Dorsolateral prefrontal cortex (tissue), 120 donors: ENCODE measurements at regions of chr2 and their contacts with region 1.

Region 1: DNA sequence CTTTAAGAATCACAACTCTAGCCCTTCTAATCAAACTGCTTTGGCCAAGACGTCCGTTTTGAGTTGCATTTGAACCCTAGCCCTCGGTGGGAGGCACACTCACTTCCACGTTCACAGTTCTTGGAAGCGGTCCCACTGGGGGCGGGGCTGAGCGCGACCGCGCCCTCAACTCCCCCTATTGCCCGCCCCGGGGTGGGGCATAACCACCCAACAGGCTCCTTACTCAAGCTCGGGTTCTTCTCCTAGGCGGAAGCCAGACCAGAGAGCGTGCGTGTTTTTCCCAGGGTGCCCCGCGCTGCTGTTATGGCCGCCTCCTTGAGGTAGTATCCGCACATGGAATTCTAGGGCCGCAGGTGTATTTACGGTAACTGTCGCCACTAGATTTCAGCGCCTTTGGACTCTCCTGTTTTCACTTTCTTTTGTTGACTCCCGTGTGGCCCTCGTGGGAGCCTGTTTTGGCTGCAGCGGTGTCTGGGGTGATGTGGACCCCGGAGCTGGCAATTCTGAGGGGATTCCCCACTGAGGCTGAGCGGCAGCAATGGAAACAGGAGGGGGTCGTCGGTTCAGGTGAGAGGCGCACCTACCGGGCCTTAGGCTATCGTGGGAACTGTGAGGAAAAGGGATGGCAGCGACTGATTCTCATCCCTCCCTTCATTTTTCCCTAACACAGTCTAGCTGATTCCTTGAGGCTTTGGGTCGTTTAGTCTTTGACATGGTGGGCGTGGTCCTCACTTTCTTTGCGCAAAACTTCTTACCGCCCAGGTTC is at the start of gene TTC27:
- DNase-seq: peak; percentile 94 to 98 (median 96)
- H3K4me3 ChIP-seq: peak within 1 kb of the TSS; percentile 54 to 99 (median 87)
- H3K27ac ChIP-seq: peak within 1 kb of the TSS in 52 of 59 donors; percentile 9 to 83 (median 64)
- H3K27me3 ChIP-seq: no peaks in the 10 kb centered on the region
- CTCF ChIP-seq: peak in 46 of 56 donors; percentile 2 to 65 (median 36)
- total RNA-seq, gene TTC27: 6.3 to 25.6 (median 12.2) TPM

Region 2: DNA sequence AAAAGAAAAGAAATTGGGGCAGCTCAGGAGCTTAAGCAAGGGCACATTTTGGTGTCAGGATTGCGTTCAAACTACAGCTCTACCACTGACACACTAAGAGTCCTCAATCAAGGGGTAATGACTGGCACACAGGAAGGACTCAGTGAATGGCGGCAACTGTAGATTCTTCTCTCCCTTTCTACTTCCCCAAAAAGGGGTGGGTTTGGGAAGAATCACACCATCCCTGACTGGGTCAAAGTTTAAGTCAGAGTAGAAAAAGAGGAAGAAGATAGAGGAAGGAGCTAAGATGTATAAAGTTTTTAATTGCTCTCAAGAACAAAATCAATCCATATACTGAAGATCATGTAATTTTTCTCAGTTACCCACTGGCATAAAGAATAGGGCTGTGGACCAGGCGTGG is 365.9 kb before region 1 on chr2:
- intact Hi-C with region 1: no loop called
- DNase-seq: no peak
- H3K4me3 ChIP-seq: no peak overlapping the region
- H3K27ac ChIP-seq: peak overlapping the region in 5 of 59 donors; percentile 11 to 52 (median 31)
- H3K27me3 ChIP-seq: peaks cover 0 to 5% (median 0%) of the 10 kb centered on the region in 45 donors
- CTCF ChIP-seq: no peak

Region 3: DNA sequence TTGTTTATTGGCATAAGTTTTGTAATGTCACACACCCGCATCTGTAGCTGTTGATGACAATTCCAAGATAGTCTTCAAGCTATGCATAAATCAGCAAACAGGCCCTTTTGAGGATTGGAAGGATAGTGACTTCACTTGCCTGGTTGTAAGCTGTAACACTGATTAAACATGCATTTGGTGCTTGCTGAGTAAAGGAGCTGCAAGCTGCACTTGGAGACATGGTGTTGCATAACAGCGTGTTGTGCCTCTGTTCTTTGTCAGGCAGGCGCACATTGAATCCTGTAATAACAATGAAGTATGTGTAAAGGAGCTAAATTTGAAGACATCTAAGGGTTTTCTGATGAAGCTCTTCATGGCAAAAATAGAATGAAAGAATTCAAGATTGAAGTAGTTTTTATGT is 68.9 kb before region 1 on chr2:
- intact Hi-C with region 1: loop called (anchors 5 kb)
- DNase-seq: peak in 9 of 10 donors; percentile 11 to 85 (median 72)
- H3K4me3 ChIP-seq: peak overlapping the region in 23 of 59 donors; percentile 0 to 53 (median 17)
- H3K27ac ChIP-seq: peak overlapping the region; percentile 45 to 96 (median 87)
- H3K27me3 ChIP-seq: no peaks in the 10 kb centered on the region
- CTCF ChIP-seq: peak in 2 of 56 donors; percentile 17

Region 4: DNA sequence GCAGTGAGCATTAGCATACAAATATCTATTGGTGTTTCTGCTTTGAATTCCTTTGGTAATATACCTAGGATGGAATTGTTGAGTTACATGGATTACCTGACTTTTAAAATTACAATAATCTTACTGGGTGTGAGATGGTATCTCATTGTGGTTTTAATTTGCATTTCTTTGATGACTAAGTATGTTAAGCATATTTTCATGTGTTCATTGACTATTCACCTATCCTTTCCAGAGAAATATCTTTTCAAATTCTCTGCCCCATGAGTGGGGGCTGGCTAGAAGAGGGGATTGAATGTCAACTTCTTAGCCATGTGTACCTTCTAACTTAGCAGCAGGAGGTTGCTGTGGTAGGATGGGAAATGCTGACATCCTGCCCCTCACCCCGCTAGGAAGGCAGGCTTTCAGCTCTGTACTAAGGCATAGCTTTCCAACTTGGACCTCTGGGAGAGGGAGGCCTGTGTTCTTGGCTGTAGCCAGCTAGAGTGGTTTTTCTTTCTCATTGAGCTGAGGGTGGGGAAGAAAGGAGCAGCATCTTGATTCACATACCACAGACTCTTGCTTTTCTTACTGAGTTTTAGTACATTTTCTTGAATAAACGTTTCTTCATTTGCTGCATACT is 63.5 kb before region 1 on chr2:
- intact Hi-C with region 1: loop called (anchors 5 kb)
- DNase-seq: no peak
- H3K4me3 ChIP-seq: no peak overlapping the region
- H3K27ac ChIP-seq: peak overlapping the region in 12 of 59 donors; percentile 6 to 96 (median 79)
- H3K27me3 ChIP-seq: no peaks in the 10 kb centered on the region
- CTCF ChIP-seq: no peak